Sigmoid colon (tissue), 7 donors: ENCODE measurements at regions of chr1 and their contacts with region 1.

Region 1: DNA sequence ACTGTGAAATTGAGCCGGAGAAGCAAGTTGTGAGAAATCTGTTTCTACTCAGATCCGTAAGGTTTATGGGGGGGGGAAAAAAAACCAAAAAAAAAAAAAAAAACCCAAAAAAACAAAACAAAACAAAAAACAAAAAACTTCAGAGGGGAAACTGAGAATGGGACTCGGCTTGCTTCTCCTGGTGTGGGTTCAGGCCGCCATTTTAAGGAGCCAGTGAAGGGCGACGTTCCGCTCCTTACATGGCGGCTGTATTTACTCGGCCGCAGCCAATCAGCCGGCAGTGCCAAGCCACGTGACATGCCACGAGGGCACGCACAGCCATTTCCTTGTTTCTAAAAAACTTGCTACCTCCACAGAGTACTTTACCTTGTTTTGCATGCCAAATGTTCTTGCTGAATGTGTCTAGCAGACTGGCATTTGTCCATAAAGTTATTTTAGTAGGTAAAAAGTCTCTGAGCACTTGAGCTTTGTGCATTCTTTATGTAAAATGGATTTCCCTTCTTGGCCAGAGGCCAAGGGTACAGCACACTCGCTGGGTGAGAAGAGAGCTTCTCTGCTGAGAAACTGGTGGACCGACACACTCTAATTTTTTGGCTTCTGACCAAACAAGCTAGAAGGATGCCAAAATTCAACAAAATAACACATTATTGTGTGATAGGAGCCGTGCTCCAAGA is 101.8 kb downstream of the NFIA start:
- DNase-seq: peak; percentile 98
- H3K4me3 ChIP-seq: peak overlapping the region; percentile 29 to 41 (median 38)
- H3K27ac ChIP-seq: peak overlapping the region; percentile 78 to 88 (median 84)
- H3K4me1 ChIP-seq: peaks cover 0 to 81% (median 62%) of the 10 kb centered on the region in 4 donors
- H3K27me3 ChIP-seq: no peaks in the 10 kb centered on the region
- CTCF ChIP-seq: no peak
- EP300 ChIP-seq: no peak
- POLR2A ChIP-seq: no peak

Region 2: DNA sequence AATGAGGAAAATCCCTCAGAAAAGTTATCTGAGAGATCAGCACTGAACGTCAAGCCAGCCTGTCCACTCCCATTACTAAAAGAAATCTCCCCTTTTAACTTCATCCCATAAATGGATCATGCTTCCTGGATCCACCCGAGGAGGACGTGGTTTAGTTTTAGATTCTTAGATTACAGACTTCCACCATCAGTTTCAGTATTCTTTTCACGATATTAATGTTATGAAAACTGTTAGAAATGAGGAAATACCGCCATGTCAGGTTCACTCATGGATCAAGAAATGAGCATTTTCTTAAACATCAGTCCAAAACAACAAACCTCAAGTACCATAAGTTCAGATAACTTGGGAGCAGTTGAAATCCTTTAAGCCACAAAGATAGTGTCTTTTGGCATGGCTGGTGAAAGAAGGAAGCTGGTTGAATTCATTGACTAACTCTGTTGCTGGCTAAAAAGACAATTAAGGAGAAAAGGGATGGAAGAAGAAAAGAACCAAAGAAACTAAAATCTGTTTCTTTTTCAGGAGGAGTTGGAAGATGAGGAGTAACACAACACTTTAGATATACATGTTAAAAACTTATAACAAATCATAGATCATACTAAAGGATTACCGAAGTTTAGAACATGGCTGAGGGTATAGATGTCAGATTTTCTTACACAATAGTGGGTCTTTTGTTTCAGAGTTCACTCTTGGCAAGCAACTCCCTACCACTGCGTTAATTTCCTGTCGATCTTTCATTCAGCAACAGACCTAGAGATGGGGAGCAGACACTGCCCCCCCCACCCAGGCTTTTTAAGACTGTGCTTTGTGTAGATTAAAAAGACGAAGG is 51.8 kb before region 1 on chr1:
- intact Hi-C with region 1: loop called (anchors 5 kb)
- DNase-seq: no peak
- H3K4me3 ChIP-seq: peak overlapping the region in 3 of 4 donors; percentile 1 to 14 (median 3)
- H3K27ac ChIP-seq: peak overlapping the region; percentile 70 to 78 (median 76)
- H3K4me1 ChIP-seq: peaks cover 0 to 33% (median 28%) of the 10 kb centered on the region in 4 donors
- H3K27me3 ChIP-seq: no peaks in the 10 kb centered on the region
- CTCF ChIP-seq: no peak
- EP300 ChIP-seq: no peak
- POLR2A ChIP-seq: no peak

Region 3: GRCh38 chr1:61226784-61227567 is 42.8 kb after region 1 on chr1:
- intact Hi-C with region 1: loop called (anchors 5 kb)
- DNase-seq: no peak
- H3K4me3 ChIP-seq: no peak overlapping the region
- H3K27ac ChIP-seq: peak overlapping the region; percentile 28 to 57 (median 52)
- H3K4me1 ChIP-seq: peaks cover 0 to 55% (median 36%) of the 10 kb centered on the region in 4 donors
- H3K27me3 ChIP-seq: no peaks in the 10 kb centered on the region
- CTCF ChIP-seq: no peak
- EP300 ChIP-seq: no peak
- POLR2A ChIP-seq: no peak

Region 4: GRCh38 chr1:61244114-61244513 is 59.9 kb after region 1 on chr1:
- intact Hi-C with region 1: loop called (anchors 5 kb)
- DNase-seq: no peak
- H3K4me3 ChIP-seq: no peak overlapping the region
- H3K27ac ChIP-seq: peak overlapping the region; percentile 77 to 87 (median 83)
- H3K4me1 ChIP-seq: peaks cover 0 to 66% (median 49%) of the 10 kb centered on the region in 4 donors
- H3K27me3 ChIP-seq: no peaks in the 10 kb centered on the region
- CTCF ChIP-seq: no peak
- EP300 ChIP-seq: no peak
- POLR2A ChIP-seq: no peak

Region 5: GRCh38 chr1:61337981-61338848 is 154.0 kb after region 1 on chr1:
- intact Hi-C with region 1: loop called (anchors 10 kb)
- DNase-seq: peak; percentile 84
- H3K4me3 ChIP-seq: peak overlapping the region in 2 of 4 donors; percentile 5
- H3K27ac ChIP-seq: peak overlapping the region; percentile 64 to 80 (median 78)
- H3K4me1 ChIP-seq: peaks cover 0 to 43% (median 38%) of the 10 kb centered on the region in 4 donors
- H3K27me3 ChIP-seq: no peaks in the 10 kb centered on the region
- CTCF ChIP-seq: peak; percentile 55 to 77 (median 68)
- EP300 ChIP-seq: peak in 1 of 4 donors; percentile 2
- POLR2A ChIP-seq: no peak